Activated T-helper 2 cell treated with anti-CD3 and anti-CD28 coated beads, Interferon-gamma antibody, Interleukin-2, Interleukin-4, amounts not matched to agents 10 μg/mL and 5 μg/mL and 100 μg/mL, durations not matched to agents 14 hours and 24 hours and 36 hours (primary cell): ENCODE measurements at regions of chr17 and their contacts with region 1.

Region 1: DNA sequence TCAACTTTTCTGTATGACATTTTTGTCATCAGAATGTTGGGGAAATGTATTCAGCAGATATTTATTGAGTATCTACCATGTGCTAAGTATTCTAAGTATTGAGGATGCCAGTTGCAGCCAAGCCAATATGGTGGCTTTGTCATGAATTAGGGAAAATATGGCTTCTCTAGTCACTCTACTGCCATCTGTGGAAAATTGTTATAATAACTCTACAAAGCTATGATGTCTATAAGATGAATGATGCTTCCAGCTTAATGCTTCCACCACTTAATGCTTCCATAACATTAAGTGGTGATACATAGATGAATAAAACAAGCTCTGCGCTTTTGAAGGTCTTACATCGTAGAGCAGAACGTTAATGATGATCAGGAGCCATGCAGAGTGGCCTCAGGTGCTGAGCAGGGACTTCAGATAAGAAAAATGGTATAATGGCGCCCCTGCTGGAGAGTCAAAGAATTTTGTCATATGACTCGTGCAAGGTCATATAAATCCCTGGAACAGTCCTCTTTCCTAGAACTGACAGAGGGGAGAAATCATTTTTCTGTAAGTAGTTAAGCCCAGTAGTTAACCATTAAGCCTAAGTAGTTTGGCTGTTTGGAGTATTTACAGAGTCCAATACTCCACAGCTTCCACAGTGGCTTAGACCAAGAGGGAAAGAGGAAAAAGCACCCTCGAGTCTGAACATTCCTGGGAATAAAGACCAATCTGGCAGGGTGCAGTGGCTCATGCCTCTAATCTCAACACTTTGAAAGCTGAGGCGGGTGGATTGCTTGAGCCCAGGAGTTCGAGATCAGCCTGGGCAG is 2.7 kb upstream of the TMIGD1 start:
- DNase-seq: peak; percentile 44
- H3K4me3 Mint-ChIP-seq: no peak overlapping the region
- H3K27ac Mint-ChIP-seq: no peak overlapping the region
- H3K4me1 Mint-ChIP-seq: peaks cover 32% of the 10 kb centered on the region
- H3K27me3 Mint-ChIP-seq: peaks cover 7% of the 10 kb centered on the region

Region 2: DNA sequence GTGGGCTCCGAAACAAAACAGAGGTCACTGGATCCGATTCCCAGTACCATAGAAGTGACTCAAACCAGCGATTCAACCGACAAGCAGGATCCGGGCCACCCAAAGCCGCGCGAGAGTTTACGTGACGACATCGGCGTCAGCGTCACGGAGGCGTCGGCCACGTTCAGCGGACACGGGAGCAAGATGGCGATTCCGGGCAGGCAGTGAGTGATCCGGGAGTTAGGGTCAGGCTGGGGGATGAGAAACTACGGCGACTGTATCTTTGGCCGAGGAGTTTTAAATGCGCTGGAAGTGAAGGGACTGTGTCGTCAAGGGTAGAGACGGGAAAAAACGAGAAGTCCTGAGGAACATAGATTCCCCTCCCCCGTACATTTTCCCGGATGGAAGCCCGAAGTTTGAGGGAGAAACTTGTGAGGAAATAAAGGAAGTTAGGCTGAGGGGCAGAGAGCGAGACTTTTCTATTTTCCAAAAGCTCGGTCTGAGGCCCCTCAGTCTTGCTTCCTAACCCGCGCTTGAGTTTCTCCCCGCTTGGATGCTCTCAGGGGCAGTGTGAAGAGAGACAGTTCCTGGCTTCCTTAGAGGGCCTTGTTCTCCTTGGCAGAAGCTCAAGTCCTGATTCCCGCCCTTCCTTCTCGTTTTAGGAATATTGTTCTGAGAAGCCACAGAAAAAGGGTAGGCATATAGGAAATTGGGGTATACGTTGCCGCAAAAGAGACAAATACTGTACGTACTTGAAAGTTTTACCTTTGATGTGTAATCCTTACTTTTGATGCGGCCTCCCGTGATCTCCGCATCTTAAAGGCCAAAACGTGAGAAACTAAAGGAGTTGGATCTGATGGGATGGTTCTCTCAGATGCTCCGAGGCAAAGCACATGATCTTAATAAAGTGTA is 219.7 kb before region 1 on chr17 and contains the start of gene NSRP1:
- intact Hi-C with region 1: loop called (anchors 2 kb)
- DNase-seq: peak; percentile 91
- H3K4me3 Mint-ChIP-seq: peak within 1 kb of the TSS; percentile 96
- H3K27ac Mint-ChIP-seq: peak within 1 kb of the TSS; percentile 98
- H3K4me1 Mint-ChIP-seq: peaks cover 59% of the 10 kb centered on the region
- H3K27me3 Mint-ChIP-seq: peaks cover under 1% of the 10 kb centered on the region
- total RNA-seq, gene NSRP1: 27.3 and 27.4 TPM in 2 replicates

Region 3: DNA sequence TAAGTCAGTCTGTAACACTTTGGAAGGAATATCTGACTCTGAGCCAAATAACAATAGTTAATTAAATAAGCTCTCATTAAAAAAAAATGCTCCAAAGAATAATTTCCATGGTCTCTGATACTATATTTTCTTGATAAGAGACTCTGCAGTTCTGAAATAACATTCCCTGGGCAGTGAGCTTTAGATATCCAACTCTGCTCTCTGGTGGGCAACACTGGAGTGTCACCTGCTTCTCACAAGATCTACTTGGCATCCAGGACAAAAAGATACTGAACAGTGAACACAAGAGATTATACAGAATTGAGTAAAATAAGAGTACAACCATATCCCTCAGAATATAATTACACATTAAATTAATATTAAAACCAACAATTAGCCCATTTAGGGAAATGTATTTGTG is 58.5 kb before region 1 on chr17:
- intact Hi-C with region 1: loop called (anchors 10 kb)
- DNase-seq: no peak
- H3K4me3 Mint-ChIP-seq: no peak overlapping the region
- H3K27ac Mint-ChIP-seq: no peak overlapping the region
- H3K4me1 Mint-ChIP-seq: peaks cover 3% of the 10 kb centered on the region
- H3K27me3 Mint-ChIP-seq: no peaks in the 10 kb centered on the region

Region 4: DNA sequence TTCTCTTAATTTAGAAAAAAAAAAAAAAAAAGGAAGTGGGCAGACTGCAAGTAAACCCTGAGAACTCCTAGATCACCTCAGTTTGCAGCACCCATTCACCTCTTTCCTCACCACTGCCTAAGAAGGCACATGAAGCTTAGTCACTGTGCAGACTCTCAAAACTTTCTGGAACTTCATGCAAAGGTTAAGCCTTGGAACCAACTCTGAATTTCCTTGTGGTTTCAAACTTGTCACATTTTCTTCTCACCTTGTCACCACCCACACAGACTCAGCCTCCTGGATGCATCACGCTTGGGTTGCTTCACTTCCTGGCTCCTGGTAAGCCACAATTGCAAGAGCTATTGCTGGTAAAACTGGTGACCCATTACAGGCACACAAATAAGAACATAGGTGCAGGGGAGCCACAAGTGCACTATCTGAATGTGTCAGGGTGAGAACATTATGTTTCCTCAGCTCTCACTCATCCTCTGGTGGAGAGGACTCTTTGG is 27.2 kb after region 1 on chr17:
- intact Hi-C with region 1: loop called (anchors 1 kb)
- DNase-seq: peak; percentile 65
- H3K4me3 Mint-ChIP-seq: no peak overlapping the region
- H3K27ac Mint-ChIP-seq: peak overlapping the region; percentile 58
- H3K4me1 Mint-ChIP-seq: peaks cover 26% of the 10 kb centered on the region
- H3K27me3 Mint-ChIP-seq: peaks cover 2% of the 10 kb centered on the region

Region 5: GRCh38 chr17:30477083-30477773 is 140.7 kb after region 1 on chr17 and contains the start of gene GOSR1:
- intact Hi-C with region 1: loop called (anchors 2 kb)
- DNase-seq: peak; percentile 89
- H3K4me3 Mint-ChIP-seq: peak within 1 kb of the TSS; percentile 95
- H3K27ac Mint-ChIP-seq: peak within 1 kb of the TSS; percentile 95
- H3K4me1 Mint-ChIP-seq: peaks cover 31% of the 10 kb centered on the region
- H3K27me3 Mint-ChIP-seq: no peaks in the 10 kb centered on the region
- total RNA-seq, gene GOSR1: 51.1 and 53.6 TPM in 2 replicates